K562 (cell line): ENCODE measurements at regions of chr15 and their contacts with region 1.

Region 1: DNA sequence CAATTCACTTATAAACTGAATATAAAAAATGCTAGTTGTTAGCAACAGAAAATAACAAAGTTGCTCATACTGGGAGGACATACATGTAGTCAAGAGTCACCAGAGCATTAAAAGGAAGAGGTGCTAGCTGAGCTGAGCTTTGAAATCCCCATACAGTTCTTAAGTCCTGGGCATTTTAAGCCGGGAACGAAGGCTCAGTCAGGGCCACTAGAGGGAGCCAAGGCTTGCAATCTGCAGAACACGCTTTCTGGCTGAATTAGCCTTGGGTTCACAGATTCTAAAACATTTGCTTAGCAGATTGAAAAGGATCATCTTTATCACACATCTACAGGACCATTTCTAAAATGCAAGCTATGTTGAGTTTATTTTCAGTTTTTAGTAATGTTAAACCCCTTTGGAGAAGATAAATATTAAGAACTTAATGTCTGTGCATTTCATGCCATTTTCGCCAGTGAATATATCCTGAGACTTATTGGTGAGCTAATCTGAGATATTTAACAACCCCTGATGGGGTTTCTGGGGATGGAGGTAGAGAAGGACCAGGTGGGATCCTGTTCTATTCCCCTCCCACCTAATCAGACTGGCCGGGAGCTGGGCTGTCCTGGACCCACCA is 26.3 kb upstream of the MNS1 start:
- DNase-seq: peak; percentile 52 to 74 (median 65)
- ATAC-seq: peak; percentile 95
- H3K4me3 ChIP-seq: no peak overlapping the region
- H3K27ac ChIP-seq: no peak overlapping the region
- H3K4me1 ChIP-seq: no peaks in the 10 kb centered on the region; a peak in 1 of 5 replicates
- H3K27me3 ChIP-seq: no peaks in the 10 kb centered on the region
- CTCF ChIP-seq: peak; percentile 81 to 90 (median 89)
- EP300 ChIP-seq: no peak
- POLR2A ChIP-seq: no peak
- RAD21 ChIP-seq: peak; percentile 73 to 87

Region 2: DNA sequence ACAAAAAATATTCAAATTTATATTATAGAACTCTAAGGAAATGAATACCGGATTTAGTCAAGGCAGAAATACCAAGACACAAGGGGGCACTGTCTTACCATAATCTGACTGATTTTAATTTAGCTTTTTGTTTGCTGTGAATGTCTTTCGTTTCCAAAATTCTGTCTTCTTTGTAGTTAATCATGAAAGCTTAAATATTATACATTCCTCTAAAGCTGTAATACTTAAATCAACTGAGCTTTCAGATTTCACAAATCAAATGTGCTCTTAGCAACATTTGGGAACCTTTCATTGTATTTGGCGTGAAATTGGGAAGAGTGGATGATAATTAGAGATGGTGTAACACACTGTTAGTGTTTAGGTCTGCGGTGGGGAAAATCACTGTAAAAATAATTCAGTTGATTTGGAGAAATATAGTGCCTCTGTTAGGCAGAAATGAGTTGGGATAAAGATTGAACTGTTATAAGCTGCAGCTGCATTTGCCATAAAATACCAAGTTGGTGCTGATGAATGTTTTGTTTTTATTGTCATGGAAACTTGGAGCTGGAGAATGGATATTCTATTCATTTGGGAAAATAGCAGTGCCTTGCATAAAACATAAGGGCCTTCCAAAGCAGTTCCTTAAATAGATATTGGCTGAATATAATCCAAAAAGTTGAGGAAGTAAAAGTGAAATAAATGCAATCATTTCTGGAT is 655.4 kb after region 1 on chr15:
- CTCF ChIA-PET with region 1: no interaction called
- POLR2A ChIA-PET with region 1: no interaction called
- in situ Hi-C with region 1: no loop called
- intact Hi-C with region 1: loop called (anchors 10 kb)
- DNase-seq: peak; percentile 10 to 53 (median 16)
- ATAC-seq: 0 out of 3 replicates have a peak, but pooled peaks have one; percentile 45
- H3K4me3 ChIP-seq: no peak overlapping the region
- H3K27ac ChIP-seq: no peak overlapping the region
- H3K4me1 ChIP-seq: peaks cover 4 to 16% of the 10 kb centered on the region in 2 experiments; a peak in 4 of 5 replicates
- H3K27me3 ChIP-seq: no peaks in the 10 kb centered on the region
- CTCF ChIP-seq: peak in 2 of 3 experiments; percentile 46 to 78; a peak in 4 of 6 replicates
- EP300 ChIP-seq: no peak
- POLR2A ChIP-seq: no peak
- RAD21 ChIP-seq: peak; percentile 48 to 74

Region 3: GRCh38 chr15:57541805-57542504 is 1050.7 kb after region 1 on chr15:
- CTCF ChIA-PET with region 1: no interaction called
- POLR2A ChIA-PET with region 1: no interaction called
- in situ Hi-C with region 1: loop called (anchors 10 kb)
- intact Hi-C with region 1: no loop called
- DNase-seq: peak; percentile 46 to 63 (median 54)
- ATAC-seq: peak; percentile 81
- H3K4me3 ChIP-seq: no peak overlapping the region
- H3K27ac ChIP-seq: no peak overlapping the region
- H3K4me1 ChIP-seq: no peaks in the 10 kb centered on the region
- H3K27me3 ChIP-seq: peaks cover 24 to 62% of the 10 kb centered on the region in 2 experiments
- CTCF ChIP-seq: peak; percentile 54 to 83 (median 77)
- EP300 ChIP-seq: no peak
- POLR2A ChIP-seq: no peak
- RAD21 ChIP-seq: peak; percentile 45 to 61; a peak in 3 of 4 replicates